G401 (cell line): ENCODE measurements at regions of chr12 and their contacts with region 1.

Region 1: DNA sequence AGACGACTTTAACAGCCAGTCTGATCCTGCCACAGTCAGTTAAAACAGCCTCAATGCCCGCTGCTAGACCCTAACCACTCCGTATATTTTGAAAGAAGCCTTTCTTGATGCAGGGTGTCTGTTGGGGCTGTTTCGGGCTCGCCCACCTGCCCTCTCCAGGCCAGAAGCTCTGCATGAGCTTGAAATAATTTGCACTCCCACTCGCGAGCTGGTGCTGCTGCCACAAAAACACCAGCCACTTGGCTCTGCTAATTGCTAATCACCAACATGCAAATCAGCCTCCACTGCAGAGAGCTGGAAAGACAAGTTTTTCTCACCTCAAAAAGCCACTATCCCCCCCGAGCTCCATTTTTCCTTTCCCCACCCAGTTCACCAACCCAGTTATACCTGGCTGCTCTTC is 15.5 kb downstream of the BAZ2A start:
- DNase-seq: no peak

Region 2: GRCh38 chr12:56518570-56518969 is 96.1 kb before region 1 on chr12:
- in situ Hi-C with region 1: loop called (anchors 5 kb)
- DNase-seq: no peak